AG04449 (cell line): ENCODE measurements at regions of chr12 and their contacts with region 1.

Region 1: DNA sequence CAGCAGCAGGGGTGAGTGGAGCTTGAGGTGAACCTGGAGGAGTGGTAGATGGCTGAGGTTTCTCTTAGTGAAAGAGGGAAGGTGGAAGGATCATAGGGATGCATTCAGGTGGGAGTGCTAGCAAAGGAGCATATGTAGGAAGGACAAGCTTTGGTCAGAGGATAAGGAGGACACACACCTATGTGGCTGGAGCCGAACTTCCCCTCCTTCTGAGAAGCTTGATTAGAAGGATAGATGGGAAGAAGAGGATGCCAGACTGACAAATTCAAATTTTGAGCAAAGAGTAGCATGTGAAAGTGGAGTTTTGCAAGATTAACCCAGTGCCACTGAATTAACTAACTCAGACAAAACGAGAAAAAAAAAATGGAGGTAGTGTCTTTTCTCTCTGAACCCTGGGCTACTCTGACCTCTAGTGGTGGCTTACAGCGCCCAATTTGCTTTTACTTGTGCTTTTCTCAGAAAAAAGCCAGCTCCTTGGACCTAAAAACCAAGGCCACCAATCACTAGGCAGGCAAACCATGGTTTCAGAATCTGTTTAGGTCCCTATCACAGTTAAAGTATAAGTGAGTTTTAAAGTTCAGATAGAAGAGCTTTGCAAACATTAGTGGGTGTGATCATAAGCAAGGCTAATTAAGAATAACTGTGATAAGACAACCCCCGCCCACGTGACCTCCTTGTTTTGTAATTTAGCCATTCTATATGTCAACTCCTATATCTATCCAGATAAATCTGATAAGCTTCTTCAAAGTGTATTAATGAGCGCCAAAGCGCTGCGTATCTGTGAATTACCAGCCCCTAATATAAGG is 15.5 kb downstream of the EMP1 start:
- DNase-seq: no peak
- H3K4me3 ChIP-seq: no peak overlapping the region
- CTCF ChIP-seq: peak; percentile 70

Region 2: DNA sequence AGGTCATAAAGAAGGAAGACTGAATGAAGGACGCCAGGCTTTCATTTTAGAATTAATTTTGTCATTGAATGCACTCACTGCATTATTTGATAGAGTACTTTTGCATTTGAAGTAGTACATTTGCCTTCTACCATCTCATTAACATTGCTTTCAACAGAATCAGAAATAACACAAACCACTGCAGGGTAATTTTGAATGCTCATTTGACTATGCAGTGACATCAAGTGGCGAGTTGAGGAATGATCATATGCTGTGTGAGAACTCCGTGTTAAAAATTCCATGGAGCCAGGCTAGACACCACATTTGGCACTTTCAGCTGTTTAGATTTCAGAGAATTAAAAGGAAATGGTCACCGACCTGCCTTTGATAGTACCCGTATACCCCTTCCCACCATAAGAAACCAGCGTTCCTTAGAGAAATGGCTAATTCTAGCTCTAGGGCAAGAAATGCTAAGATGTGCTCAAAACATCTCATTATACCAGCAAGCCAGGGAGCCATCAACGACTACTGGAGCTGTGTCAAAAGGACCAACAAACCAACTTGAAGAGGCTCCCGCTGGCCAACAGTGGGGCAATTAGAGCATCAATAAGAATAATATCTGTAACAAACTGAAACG is 228.5 kb before region 1 on chr12:
- CTCF ChIA-PET with region 1: interaction called, 88 read pairs
- POLR2A ChIA-PET with region 1: no interaction called
- DNase-seq: no peak
- H3K4me3 ChIP-seq: no peak overlapping the region
- CTCF ChIP-seq: peak; percentile 69

Region 3: GRCh38 chr12:13023811-13024530 is 188.1 kb before region 1 on chr12:
- CTCF ChIA-PET with region 1: interaction called, 40 read pairs
- POLR2A ChIA-PET with region 1: no interaction called
- DNase-seq: no peak
- H3K4me3 ChIP-seq: no peak overlapping the region
- CTCF ChIP-seq: peak; percentile 48

Region 4: DNA sequence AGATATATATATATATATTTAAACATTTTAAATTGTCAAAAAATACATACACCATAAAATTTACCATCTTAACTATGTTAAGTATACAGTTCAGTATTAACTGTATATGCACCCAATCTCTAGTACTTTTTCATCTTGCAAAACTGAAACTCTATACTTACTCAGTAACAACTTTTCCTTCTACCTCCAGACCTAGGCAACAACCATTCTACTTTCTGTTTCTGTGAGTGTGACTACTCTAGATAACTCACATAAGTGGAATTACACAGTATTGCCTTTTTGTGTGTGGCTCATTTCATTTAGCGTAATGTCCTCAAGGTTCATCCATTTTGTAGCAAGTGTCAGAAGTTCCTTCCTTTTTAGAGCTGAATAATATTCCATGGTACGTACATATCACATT is 159.6 kb before region 1 on chr12:
- CTCF ChIA-PET with region 1: interaction called, 10 read pairs
- POLR2A ChIA-PET with region 1: no interaction called
- DNase-seq: no peak
- H3K4me3 ChIP-seq: no peak overlapping the region
- CTCF ChIP-seq: no peak

Region 5: DNA sequence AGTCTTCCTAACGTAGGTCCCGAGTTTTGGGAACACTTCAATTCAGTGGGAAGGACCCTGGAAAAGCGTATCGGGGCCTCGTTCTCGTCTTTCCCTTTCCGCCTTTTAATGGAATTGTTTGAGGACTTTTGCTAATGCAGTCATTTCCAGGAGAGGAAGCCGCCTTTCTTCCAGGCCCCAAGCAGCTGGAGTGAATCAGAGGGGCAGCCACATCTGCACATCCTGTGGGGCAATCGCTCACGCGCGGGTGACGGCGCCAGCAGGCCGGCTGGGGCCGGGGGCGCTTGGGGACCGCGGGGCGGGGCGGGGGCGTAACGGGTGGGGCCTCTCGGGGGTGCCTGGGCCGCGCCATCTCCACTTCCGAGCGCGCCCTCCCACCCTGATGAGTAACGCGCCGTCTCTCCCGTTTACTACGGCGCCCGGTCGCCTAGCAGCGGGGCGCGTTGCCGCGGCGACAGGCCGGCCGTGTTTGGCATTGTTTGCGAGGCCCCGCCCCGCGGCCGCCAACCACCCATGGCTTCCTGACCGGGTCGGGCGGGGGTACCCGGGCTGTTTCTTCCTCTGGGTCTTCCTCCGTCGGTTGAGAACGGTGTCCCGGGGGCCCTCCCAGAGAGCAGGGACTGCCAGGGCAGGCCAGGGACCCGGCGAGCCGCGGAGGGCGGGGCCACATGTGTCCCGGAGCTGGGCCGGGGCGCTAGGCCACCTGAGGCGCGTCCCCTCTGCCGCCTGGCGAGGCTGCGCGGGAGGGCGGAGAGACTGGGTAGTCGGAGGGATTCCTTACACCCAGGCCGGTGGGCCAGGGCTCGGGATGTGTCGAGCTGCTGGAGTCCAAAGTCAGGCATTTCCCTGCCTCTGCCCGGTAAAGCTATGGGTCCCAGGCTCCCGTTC is 110.9 kb before region 1 on chr12:
- CTCF ChIA-PET with region 1: interaction called, 123 read pairs
- POLR2A ChIA-PET with region 1: interaction called, 3 read pairs
- DNase-seq: no peak
- H3K4me3 ChIP-seq: peak overlapping the region; percentile 51
- CTCF ChIP-seq: no peak

Region 6: GRCh38 chr12:13187399-13187798 is 24.7 kb before region 1 on chr12:
- CTCF ChIA-PET with region 1: interaction called, 13 read pairs
- POLR2A ChIA-PET with region 1: no interaction called
- DNase-seq: no peak
- H3K4me3 ChIP-seq: no peak overlapping the region
- CTCF ChIP-seq: no peak

Region 7: GRCh38 chr12:13255792-13256691 is 44.0 kb after region 1 on chr12:
- CTCF ChIA-PET with region 1: interaction called, 14 read pairs
- POLR2A ChIA-PET with region 1: no interaction called
- DNase-seq: peak; percentile 38
- H3K4me3 ChIP-seq: peak overlapping the region; percentile 52
- CTCF ChIP-seq: peak; percentile 100

Region 8: DNA sequence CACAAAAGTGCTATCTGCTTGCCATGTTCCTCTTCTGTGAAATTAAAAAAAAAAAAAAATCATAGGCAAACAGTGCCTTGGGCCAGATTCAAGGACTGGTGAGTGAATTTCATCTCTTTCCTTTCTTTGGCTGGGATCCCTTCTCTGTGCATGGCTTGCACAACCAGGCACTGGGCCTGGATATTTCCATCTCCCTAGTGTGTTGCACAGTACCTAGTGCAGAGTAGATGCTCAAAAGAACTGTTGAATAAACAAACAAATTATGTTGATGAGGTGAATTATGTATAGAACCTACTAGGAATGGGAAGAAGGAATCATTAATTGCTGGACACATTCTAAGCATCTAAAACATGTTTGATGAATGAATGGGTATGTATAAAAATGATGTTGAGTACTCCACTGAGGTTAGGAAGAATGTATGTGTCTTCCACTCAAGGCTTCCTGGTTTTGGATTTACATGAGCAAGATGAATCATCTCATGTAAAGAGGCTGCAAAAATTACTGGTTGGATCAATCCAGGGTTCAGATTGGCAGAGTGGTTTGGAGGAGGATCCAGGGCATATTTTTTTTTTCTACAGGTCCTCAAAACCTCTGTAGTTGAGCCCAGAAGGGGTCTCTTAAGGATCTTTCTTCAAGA is 77.7 kb after region 1 on chr12:
- CTCF ChIA-PET with region 1: no interaction called
- POLR2A ChIA-PET with region 1: no interaction called
- DNase-seq: no peak
- H3K4me3 ChIP-seq: no peak overlapping the region
- CTCF ChIP-seq: no peak

Region 9: DNA sequence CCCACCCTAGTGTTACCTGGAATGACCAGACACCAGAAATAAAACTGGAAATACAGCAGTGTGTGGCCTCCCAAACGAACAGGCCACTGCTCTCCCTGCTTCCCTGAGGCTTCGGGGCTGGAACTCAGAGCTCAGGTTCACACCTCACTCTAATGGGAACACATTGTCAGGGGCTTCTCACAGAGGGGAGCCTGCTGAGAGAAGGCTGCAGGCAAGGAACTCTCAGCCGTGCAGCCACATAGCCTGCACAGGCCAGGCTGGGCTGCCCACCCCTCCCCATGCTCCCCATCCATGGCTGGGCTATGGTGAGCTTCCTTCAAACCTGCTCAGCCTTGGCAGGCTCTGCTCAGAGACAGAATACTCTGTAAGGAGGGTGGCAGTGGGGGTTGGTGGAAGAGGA is 286.9 kb after region 1 on chr12:
- CTCF ChIA-PET with region 1: no interaction called
- POLR2A ChIA-PET with region 1: no interaction called
- DNase-seq: no peak
- H3K4me3 ChIP-seq: no peak overlapping the region
- CTCF ChIP-seq: no peak